Heart right ventricle (tissue), 16 donors: ENCODE measurements at regions of chr2 and their contacts with region 1.

Region 1: DNA sequence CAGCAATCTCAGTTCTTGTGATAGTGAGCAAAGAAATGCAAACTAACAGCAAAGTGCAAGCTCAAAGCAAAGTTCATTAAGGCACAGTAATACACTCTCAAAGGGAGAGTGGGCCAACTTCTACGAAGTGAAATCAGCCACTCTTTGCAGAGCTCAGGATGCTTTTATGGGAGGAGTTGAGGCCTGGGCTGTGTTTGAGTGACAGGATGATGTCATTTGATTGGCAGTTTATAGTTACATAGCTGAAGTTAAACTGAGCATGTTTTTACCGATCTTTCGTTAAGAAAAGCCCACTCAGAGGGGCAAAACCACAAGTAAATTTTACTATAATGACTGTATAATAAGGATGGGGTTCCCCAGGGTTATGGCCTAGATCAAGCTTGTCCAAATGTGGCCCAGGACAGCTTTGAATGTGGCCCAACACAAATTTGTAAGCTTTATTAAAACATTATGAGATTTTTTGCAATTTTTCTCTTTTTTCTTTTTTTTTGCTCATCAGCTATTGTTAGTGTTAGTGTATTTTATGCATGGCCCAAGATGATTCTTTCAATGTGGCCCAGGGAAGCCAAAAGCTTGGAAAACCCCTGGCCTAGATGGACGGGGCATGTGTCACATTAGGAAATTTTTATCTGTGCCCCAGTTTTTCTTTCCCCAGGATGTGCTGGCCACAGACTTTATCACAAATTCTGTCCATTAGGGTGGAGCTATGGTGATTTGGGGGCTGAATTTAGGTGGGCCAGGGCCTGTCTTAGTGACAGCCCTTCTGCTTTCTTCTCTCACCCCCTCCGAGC is 8.3 kb upstream of the DNAH7 start:
- DNase-seq: no peak
- ATAC-seq: no peak
- H3K4me3 ChIP-seq: no peak overlapping the region
- H3K27ac ChIP-seq: no peak overlapping the region
- H3K4me1 ChIP-seq: peaks cover 0 to 31% (median 16%) of the 10 kb centered on the region in 9 donors
- H3K27me3 ChIP-seq: no peaks in the 10 kb centered on the region
- CTCF ChIP-seq: no peak

Region 2: DNA sequence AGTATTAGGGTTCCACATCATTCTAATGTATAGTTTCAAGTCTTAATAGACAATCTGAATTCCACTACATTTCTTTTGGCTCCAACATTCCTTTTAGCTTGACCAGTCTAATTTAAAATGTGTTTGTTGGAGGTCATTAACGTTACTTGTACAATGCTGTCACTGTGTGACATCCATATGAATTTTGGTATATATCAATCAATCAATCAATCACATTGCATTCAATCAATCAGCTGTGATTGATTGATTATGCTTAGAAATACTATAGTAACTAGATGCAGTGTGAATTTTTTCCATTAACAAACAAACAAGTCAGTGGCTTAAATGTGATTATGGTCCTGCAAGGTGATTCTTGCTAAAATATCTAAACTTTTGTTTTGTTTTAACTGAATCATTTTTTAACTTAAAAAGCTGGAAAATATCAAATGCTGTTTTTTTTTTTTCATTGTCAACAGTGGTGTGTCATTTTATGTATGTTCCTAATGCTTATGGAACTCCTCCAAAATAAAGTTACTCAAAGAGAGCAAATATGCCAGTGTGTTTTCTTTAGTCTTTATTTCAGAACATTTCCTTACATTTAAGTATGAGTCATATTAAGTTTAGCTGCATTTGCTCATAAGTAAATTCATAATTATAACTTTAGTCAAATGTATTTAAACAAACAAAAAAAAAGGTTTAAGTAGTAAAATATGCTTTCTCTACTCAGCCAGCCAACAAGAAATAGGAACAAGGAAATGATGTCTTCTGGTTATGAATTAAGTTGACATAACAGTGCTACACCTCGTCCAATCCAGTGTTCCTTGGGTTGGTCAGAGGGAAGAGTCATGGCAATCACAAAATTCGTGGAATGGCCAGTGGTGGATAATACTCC is 339.6 kb before region 1 on chr2:
- intact Hi-C with region 1: no loop called
- DNase-seq: no peak
- ATAC-seq: no peak
- H3K4me3 ChIP-seq: no peak overlapping the region
- H3K27ac ChIP-seq: no peak overlapping the region
- H3K4me1 ChIP-seq: no peaks in the 10 kb centered on the region
- H3K27me3 ChIP-seq: no peaks in the 10 kb centered on the region
- CTCF ChIP-seq: no peak

Region 3: GRCh38 chr2:196171248-196171871 is 94.4 kb after region 1 on chr2 and contains the start of gene STK17B:
- intact Hi-C with region 1: loop called in 1 of 10 experiments (anchors 10 kb)
- DNase-seq: peak; percentile 95 to 96
- ATAC-seq: peak; percentile 96 to 99 (median 97)
- H3K4me3 ChIP-seq: peak within 1 kb of the TSS; percentile 75 to 97 (median 85)
- H3K27ac ChIP-seq: peak within 1 kb of the TSS; percentile 67 to 94 (median 80)
- H3K4me1 ChIP-seq: peaks cover 0 to 43% (median 20%) of the 10 kb centered on the region in 9 donors
- H3K27me3 ChIP-seq: no peaks in the 10 kb centered on the region
- CTCF ChIP-seq: peak in 4 of 9 donors; percentile 8 to 31 (median 12)
- total RNA-seq, gene STK17B: 2.6 to 20.4 (median 4.4) TPM

Region 4: GRCh38 chr2:196291873-196292800 is 215.2 kb after region 1 on chr2:
- intact Hi-C with region 1: loop called in 3 of 10 experiments (anchors 10 kb)
- DNase-seq: no peak
- ATAC-seq: peak in 6 of 8 donors; percentile 26 to 86 (median 36)
- H3K4me3 ChIP-seq: no peak overlapping the region
- H3K27ac ChIP-seq: peak overlapping the region in 7 of 10 donors; percentile 20 to 69 (median 49)
- H3K4me1 ChIP-seq: peaks cover 0 to 64% (median 36%) of the 10 kb centered on the region in 9 donors
- H3K27me3 ChIP-seq: no peaks in the 10 kb centered on the region
- CTCF ChIP-seq: no peak

Region 5: DNA sequence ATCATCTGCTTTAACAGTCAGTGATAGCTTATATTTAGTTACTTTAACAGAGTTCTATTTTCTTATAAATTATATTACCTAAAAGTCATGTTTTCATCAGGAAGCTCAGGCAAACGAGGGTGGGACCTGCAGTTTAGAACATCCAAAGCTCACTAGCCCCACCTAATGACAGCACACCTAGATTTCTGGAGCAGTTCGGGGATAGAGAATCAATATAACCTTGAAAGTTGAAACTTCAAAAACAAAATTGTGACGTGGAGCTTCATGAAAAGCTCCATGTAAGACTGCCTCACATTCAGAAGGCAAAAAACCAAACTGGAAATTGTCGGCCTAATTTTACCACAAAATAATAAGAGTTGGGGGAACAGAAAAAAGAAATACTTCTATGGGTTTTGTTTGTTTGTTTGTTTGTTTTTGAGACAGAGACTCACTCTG is 376.7 kb after region 1 on chr2:
- intact Hi-C with region 1: loop called in 7 of 10 experiments (anchors 5 to 10 kb)
- DNase-seq: peak in 1 of 2 donors; percentile 67
- ATAC-seq: peak in 7 of 8 donors; percentile 47 to 80 (median 71)
- H3K4me3 ChIP-seq: no peak overlapping the region
- H3K27ac ChIP-seq: peak overlapping the region in 1 of 10 donors; percentile 18
- H3K4me1 ChIP-seq: peaks cover 0 to 17% (median 8%) of the 10 kb centered on the region in 9 donors
- H3K27me3 ChIP-seq: peaks cover 0 to 4% (median 0%) of the 10 kb centered on the region in 7 donors
- CTCF ChIP-seq: peak; percentile 33 to 82 (median 71)

Region 6: GRCh38 chr2:196639180-196640030 is 562.4 kb after region 1 on chr2 and contains the start of gene CCDC150:
- intact Hi-C with region 1: loop called in 1 of 10 experiments (anchors 5 kb)
- DNase-seq: peak; percentile 93
- ATAC-seq: peak; percentile 100
- H3K4me3 ChIP-seq: peak within 1 kb of the TSS; percentile 49 to 74 (median 65)
- H3K27ac ChIP-seq: peak within 1 kb of the TSS in 5 of 10 donors; percentile 22 to 69 (median 40)
- H3K4me1 ChIP-seq: peaks cover 0 to 17% (median 5%) of the 10 kb centered on the region in 9 donors
- H3K27me3 ChIP-seq: no peaks in the 10 kb centered on the region
- CTCF ChIP-seq: peak in 5 of 9 donors; percentile 5 to 46 (median 43)
- total RNA-seq, gene CCDC150: 0.27 to 3.8 (median 2.0) TPM

Region 7: DNA sequence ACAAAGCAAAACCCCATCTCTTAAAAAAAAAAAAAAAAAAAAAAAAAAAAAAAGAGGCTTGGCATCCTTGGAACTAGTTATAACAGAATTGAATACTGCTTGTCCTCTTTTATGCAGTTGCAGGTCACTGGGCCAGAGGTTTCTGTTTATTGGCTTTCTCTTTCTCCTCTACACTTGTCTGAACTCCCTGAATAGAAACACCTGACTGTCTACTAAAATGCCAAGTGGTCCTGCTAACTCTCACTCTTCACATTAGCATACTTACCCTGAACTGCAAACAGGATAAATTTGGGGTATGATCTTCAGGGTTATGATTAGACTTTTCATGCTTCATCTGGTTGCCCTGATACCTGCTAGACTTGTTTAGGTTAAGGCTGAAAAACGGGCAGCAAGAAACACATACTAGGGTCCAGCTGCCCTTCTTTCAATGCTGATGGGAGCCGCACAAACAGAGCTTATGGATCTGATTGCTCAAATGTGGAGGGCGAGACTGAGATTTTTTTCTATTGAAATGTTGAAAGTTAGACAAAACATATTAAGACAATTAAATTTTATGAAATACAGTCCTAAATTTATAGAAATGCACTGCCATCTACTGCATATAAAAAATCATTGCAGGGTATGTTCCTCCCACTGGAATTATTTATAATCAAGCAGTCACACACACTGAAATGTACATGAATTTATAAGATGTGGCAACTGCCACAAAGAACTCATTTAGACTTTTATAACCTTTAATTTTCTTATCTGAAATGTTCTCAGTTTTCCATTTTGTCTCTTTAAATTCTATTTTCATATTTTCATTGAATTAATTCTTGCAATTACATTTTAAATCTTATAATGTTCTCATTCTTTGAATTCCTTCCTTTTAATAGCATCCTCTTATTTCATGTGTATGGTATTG is 681.8 kb after region 1 on chr2:
- intact Hi-C with region 1: loop called in 4 of 10 experiments (anchors 2 to 10 kb)
- DNase-seq: no peak
- ATAC-seq: peak in 5 of 8 donors; percentile 47 to 86 (median 81)
- H3K4me3 ChIP-seq: no peak overlapping the region
- H3K27ac ChIP-seq: no peak overlapping the region
- H3K4me1 ChIP-seq: peaks cover 0 to 8% (median 0%) of the 10 kb centered on the region in 9 donors
- H3K27me3 ChIP-seq: no peaks in the 10 kb centered on the region
- CTCF ChIP-seq: peak in 8 of 9 donors; percentile 9 to 61 (median 48)